Left cardiac atrium (tissue), 4 donors: ENCODE measurements at regions of chr6 and their contacts with region 1.

Region 1: GRCh38 chr6:154805288-154805911 is 72.2 kb downstream of the SCAF8 start:
- DNase-seq: no peak
- ATAC-seq: peak in 1 of 2 donors; percentile 54

Region 2: DNA sequence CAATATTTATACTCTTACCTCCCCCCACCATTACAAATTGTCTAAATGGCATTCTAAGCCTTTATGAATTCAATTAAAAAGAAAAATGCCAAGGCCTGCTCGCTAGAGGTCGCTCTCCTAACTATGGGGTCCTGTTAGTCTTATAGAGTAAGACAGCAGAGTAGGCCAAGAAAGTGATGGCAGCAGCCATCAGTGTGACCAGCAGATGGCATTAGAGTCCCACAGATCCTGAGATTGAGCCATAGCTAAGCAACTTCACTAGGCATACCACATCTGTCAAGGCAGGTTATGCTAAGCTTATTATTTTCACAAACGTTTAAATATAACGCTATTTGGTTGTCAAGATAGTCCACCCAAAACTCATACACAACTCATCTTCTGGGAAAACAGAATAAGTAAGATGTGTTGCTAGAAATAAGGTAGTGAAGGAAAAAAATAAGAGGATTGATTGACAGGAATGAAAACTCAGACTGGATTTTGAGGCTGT is 129.8 kb before region 1 on chr6:
- intact Hi-C with region 1: loop called (anchors 2 to 10 kb)
- DNase-seq: peak; percentile 84
- ATAC-seq: peak; percentile 98

Region 3: DNA sequence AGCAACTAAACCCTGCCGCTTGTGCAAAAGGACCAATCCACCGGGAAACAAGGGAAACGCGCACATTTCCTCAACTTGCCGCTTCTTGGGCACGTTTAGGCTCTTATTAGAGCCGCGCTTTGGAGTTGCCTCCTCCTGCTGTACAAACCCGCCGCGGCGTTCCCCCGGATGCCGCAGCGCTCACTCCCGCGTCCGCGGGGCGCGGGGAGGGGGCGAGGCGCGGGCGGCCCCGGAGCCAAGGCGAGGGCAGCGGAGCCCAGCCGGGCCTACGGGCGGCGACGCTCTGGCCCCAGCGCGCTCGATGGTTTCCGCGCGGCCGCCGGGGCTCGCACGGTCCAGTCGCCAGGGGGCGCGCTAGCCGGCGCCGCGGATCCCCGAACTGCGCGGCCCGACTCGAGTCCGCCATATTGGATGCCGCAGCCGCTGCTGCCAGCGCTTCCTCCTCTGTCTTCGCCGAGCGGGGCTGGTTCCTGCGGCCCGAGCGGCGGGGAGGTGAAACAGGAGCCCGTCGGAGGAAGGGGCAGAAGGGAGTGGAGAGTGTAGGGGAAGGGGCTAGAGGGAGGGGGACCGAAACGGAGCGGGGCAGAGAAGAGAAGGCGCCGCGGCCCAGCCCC is 72.3 kb before region 1 on chr6 and contains the start of gene SCAF8:
- intact Hi-C with region 1: loop called (anchors 2 to 10 kb)
- DNase-seq: peak; percentile 86
- ATAC-seq: peak; percentile 91 to 92
- total RNA-seq, gene SCAF8: 37.8 to 44.1 TPM